MCF 10A (cell line): ENCODE measurements at regions of chr5 and their contacts with region 1.

Region 1: GRCh38 chr5:98923966-98924365 is 4.8 kb downstream of the CHD1 start:
- DNase-seq: no peak
- H3K4me3 Mint-ChIP-seq: no peak overlapping the region
- H3K27ac Mint-ChIP-seq: no peak overlapping the region
- H3K4me1 Mint-ChIP-seq: peaks cover 11% of the 10 kb centered on the region
- H3K27me3 Mint-ChIP-seq: no peaks in the 10 kb centered on the region
- CTCF ChIP-seq: no peak

Region 2: GRCh38 chr5:98911280-98912040 is 12.5 kb before region 1 on chr5:
- CTCF ChIA-PET with region 1: interaction called, 5 read pairs
- POLR2A ChIA-PET with region 1: interaction called, 78 read pairs
- intact Hi-C with region 1: no loop called
- DNase-seq: no peak
- H3K4me3 Mint-ChIP-seq: no peak overlapping the region
- H3K27ac Mint-ChIP-seq: no peak overlapping the region
- H3K4me1 Mint-ChIP-seq: peaks cover 20% of the 10 kb centered on the region
- H3K27me3 Mint-ChIP-seq: no peaks in the 10 kb centered on the region
- CTCF ChIP-seq: no peak